ENCODE measurements at regions of chr16 and their contacts with region 1.

Region 1: GRCh38 chr16:66315210-66315825 is 51.2 kb upstream of the CDH5 start:
- DNase-seq: peak; percentile 25 to 75
- ATAC-seq: peak; percentile 82 to 93 (median 90)
- H3K4me3 ChIP-seq: no peak overlapping the region
- H3K27ac ChIP-seq: no peak overlapping the region
- H3K4me1 ChIP-seq: peaks cover 0 to 12% (median 7%) of the 10 kb centered on the region in 9 donors
- H3K27me3 ChIP-seq: peaks cover 0 to 7% (median 0%) of the 10 kb centered on the region in 7 donors
- CTCF ChIP-seq: peak in 8 of 9 donors; percentile 92 to 98 (median 96)

Region 2: DNA sequence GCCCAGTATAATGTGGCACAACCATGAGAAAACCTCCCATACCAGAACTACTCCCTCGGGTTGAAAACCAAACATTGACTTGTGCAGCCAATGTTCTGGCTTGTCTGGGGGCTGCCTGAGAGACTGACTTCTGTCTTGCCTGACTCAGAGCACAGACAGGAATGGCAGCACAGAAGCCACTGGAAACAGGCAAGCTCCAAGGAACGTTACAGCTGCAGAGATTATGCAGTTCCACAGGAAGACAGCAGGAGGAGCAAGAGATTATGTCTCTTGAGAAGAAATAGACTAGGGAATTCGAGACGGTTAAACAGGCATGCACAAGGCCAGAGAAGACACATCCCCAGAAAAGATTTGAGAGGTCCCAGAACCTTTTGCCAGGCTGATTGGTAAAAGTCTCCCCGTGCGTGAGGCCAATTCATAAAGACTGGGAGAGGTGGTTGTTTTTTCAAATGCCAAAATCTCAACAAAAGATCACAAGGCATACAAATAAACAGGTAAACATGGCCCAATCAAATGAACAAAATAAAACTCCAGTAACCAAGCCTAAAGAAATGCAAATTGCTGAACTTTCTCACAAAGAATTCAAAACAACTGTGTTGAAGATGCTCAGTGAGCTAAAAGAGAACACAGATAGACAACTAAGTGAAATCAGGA is 39.4 kb before region 1 on chr16:
- intact Hi-C with region 1: loop called in 2 of 10 experiments (anchors 2 to 5 kb)
- DNase-seq: no peak
- ATAC-seq: peak in 3 of 8 donors; percentile 23 to 35 (median 31)
- H3K4me3 ChIP-seq: no peak overlapping the region
- H3K27ac ChIP-seq: no peak overlapping the region
- H3K4me1 ChIP-seq: no peaks in the 10 kb centered on the region
- H3K27me3 ChIP-seq: peaks cover 0 to 14% (median 0%) of the 10 kb centered on the region in 7 donors
- CTCF ChIP-seq: peak in 8 of 9 donors; percentile 22 to 63 (median 57)

Measured in heart right ventricle (tissue), 16 donors.